Spleen (tissue), 13 donors: ENCODE measurements at regions of chr1 and their contacts with region 1.

Region 1: GRCh38 chr1:181479137-181479745 is 4.1 kb upstream of the CACNA1E start:
- DNase-seq: peak; percentile 78
- H3K4me3 ChIP-seq: no peak overlapping the region
- H3K27ac ChIP-seq: no peak overlapping the region
- H3K4me1 ChIP-seq: peaks cover 0 to 28% (median 17%) of the 10 kb centered on the region in 6 donors
- H3K27me3 ChIP-seq: peaks cover 0 to 77% (median 24%) of the 10 kb centered on the region in 7 donors
- CTCF ChIP-seq: peak; percentile 46 to 88 (median 73)
- POLR2A ChIP-seq: no peak

Region 2: DNA sequence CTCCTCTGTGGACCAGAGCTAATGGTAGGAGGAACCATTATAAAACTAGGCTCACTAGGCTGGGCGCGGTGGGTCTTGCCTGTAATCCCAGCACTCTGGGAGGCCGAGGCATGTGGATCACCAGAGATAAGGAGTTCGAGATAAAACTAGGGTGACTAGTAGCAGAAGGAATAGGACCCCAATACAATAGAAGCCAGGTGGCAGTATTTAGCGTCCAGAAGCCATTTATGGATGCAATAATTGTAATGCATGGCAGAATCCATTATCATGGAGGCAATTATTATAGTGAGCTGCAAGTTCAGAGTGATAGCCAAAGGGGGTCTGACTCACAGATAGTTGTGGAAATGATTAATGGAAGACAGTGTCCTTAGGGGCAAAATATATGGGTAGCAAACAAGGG is 246.7 kb before region 1 on chr1:
- intact Hi-C with region 1: no loop called
- DNase-seq: no peak
- H3K4me3 ChIP-seq: no peak overlapping the region
- H3K27ac ChIP-seq: no peak overlapping the region
- H3K4me1 ChIP-seq: no peaks in the 10 kb centered on the region
- H3K27me3 ChIP-seq: peaks cover 0 to 6% (median 0%) of the 10 kb centered on the region in 7 donors
- CTCF ChIP-seq: no peak
- POLR2A ChIP-seq: no peak

Region 3: DNA sequence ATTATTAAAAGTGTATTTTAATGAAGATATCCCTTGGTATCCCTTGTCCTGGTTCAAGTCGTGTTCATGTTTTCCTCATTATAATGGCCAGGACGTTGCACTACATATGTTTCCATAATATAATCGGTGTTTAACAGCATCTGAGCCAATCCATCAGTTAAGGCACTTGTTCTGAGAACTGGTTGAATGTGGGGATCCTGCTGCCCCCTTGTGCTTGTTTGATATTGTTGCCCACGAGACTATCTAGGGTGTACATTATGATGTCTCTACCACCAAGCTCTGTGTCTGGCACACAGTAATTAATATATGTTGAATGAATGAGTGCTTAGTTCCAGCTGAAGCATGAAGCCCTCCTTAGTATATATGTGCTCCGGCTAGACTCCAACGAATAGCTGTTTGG is 197.0 kb after region 1 on chr1:
- intact Hi-C with region 1: loop called (anchors 10 kb)
- DNase-seq: no peak
- H3K4me3 ChIP-seq: no peak overlapping the region
- H3K27ac ChIP-seq: no peak overlapping the region
- H3K4me1 ChIP-seq: no peaks in the 10 kb centered on the region
- H3K27me3 ChIP-seq: peaks cover 0 to 29% (median 0%) of the 10 kb centered on the region in 7 donors
- CTCF ChIP-seq: peak in 5 of 11 experiments; percentile 18 to 46 (median 31)
- POLR2A ChIP-seq: no peak

Region 4: GRCh38 chr1:182054698-182055326 is 575.6 kb after region 1 on chr1:
- intact Hi-C with region 1: loop called (anchors 10 kb)
- DNase-seq: no peak
- H3K4me3 ChIP-seq: no peak overlapping the region
- H3K27ac ChIP-seq: no peak overlapping the region
- H3K4me1 ChIP-seq: peaks cover 0 to 7% (median 3%) of the 10 kb centered on the region in 6 donors
- H3K27me3 ChIP-seq: peaks cover 0 to 52% (median 29%) of the 10 kb centered on the region in 7 donors
- CTCF ChIP-seq: peak in 10 of 11 experiments; percentile 10 to 69 (median 52)
- POLR2A ChIP-seq: no peak

Region 5: DNA sequence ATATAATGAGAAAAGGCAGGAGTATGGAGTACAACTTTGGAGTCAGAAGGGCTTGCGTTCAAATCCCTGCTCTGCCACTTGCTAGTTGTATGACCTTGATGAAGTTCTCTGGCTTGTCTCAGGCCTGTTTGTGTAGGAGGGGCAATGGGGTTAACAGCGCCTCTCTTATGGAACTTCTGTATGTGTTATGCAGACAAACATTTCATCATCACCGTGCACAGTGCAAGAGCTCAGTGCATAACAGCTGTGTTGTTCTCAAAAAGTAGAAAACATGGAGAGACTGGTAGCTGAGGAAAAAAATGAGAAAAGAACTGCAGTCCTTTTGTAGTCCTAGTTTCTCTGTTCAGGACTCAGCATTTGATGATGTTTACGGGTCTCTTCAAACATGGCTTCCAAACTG is 592.7 kb after region 1 on chr1:
- intact Hi-C with region 1: loop called (anchors 10 kb)
- DNase-seq: no peak
- H3K4me3 ChIP-seq: no peak overlapping the region
- H3K27ac ChIP-seq: no peak overlapping the region
- H3K4me1 ChIP-seq: peaks cover 0 to 4% (median 0%) of the 10 kb centered on the region in 6 donors
- H3K27me3 ChIP-seq: peaks cover 0 to 33% (median 0%) of the 10 kb centered on the region in 7 donors
- CTCF ChIP-seq: no peak
- POLR2A ChIP-seq: no peak